Cardiac septum (tissue), 1 donor: ENCODE measurements at regions of chr3 and their contacts with region 1.

Region 1: GRCh38 chr3:19866751-19867347 is 67.2 kb downstream of the EFHB start:
- DNase-seq: no peak

Region 2: GRCh38 chr3:19065027-19065426 is 801.8 kb before region 1 on chr3:
- intact Hi-C with region 1: loop called (anchors 5 kb)
- DNase-seq: no peak

Region 3: GRCh38 chr3:19543212-19543841 is 323.5 kb before region 1 on chr3:
- intact Hi-C with region 1: no loop called
- DNase-seq: no peak